Posterior vena cava (tissue), 2 donors: ENCODE measurements at regions of chr14 and their contacts with region 1.

Region 1: DNA sequence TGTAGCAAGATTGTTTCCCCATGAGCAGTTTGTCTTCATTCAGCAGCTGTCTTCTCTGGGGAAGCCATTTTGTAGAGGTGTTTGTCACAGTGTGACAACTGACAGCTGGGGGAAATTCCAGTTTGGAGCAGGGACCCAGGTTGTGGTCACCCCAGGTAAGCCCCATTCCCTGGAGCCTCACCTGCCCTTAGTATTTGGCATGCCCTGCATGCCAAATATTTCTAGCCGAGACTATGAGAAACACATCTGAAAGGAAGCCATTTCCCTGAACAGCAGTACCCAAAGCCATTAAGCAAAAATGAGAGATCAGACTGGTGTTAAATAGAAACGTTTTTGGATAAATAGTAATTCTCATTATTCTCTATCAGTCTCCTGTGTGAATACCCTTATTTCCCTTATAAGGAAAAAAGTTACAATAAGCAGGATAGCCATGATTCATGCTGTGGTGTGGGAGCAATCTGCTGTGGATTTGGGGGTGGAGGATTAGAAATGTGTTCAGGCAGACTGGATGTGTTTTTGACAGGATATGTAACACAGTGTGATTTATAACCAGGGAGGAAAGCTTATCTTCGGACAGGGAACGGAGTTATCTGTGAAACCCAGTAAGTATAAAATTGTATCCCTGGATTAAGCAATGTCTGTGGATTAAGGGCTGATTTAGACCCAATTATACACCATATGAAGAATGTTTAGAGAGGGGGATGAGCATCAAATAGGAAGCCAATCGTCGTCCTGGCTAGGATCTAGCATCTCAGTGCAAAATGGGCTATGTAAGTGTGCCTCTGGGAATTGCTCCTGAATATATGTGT is 68.9 kb downstream of the DAD1 start:
- DNase-seq: no peak

Region 2: GRCh38 chr14:21133901-21134300 is 1386.2 kb before region 1 on chr14:
- intact Hi-C with region 1: loop called in 1 of 2 experiments (anchors 5 kb)
- DNase-seq: no peak

Region 3: DNA sequence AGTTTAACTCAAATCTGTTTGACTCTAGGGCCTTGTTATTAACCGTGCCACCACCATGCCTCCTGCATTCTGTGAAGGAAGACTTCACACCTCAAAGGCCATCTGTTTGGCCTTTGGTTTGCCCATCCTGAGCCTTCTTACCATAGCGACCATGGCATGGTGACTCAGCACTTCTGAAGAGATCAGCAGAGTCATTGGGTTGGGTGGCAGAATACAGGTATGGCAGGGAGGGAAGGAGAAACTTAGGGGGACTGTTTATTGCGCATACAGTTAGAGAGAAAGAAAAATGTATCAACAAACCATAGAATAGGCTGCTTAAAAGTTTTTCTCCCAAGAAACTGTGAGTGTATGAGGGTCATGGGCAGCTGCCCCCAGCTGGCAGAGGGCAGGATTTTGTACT is 19.8 kb after region 1 on chr14:
- intact Hi-C with region 1: loop called in 1 of 2 experiments (anchors 2 kb)
- DNase-seq: no peak

Region 4: DNA sequence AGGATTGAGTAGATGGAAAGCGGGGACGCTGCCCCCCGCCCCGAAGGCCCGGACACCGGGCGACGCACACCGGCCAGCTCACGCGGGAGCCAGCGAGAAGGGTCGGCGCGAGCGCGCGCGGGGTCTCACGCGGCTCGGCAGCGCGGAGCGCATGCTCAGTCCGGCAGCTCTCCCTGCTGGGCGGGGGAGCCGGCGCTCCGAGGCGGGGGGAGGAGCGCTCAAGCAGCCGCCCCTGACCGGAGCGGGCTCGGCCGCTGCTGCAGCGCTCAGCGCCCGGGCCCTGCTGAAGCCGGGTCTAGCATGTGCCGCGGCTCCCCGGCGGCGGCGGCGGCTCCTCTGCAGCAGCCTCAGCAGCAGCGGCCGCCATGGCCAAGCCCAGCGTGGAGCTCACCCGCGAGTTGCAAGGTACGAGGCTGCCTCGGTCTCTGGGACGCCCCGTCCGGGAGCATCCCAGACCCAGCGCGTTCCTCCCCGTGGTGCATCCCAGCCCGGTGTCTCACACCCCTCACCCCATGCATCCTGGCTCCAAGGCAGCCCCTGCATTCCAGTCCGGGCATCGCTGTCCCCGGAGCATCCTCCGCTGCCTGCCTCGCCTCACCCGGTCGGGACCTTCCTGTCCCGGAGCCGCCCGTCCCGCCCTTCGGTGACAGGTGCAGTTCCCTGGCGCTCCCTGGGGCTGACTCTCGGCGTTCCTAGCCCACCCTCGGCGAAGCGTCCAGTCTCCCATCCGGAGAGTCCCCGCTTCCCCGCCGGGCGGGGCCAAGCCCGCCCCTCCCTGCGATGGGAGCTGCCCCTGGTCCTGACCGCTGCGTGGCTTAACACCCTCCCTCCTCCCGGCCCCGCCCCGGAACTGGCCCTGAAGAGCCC is 1531.9 kb after region 1 on chr14 and contains the start of gene CARMIL3:
- intact Hi-C with region 1: loop called in 1 of 2 experiments (anchors 5 kb)
- DNase-seq: peak; percentile 88
- total RNA-seq, gene CARMIL3: 0.14 to 0.23 TPM